ENCODE measurements at regions of chr6 and their contacts with region 1.

Region 1: GRCh38 chr6:136737871-136738691 is 54.2 kb downstream of the MAP3K5 start:
- DNase-seq: no peak
- ATAC-seq: no peak
- H3K4me3 ChIP-seq: no peak overlapping the region
- H3K4me3 Mint-ChIP-seq: no peak overlapping the region
- H3K27ac ChIP-seq: no peak overlapping the region
- H3K27ac Mint-ChIP-seq: no peak overlapping the region
- H3K4me1 ChIP-seq: peaks cover 0 to 11% of the 10 kb centered on the region in 2 experiments
- H3K4me1 Mint-ChIP-seq: peaks cover 28 to 65% (median 46%) of the 10 kb centered on the region in 3 donors
- H3K27me3 ChIP-seq: no peaks in the 10 kb centered on the region
- H3K27me3 Mint-ChIP-seq: no peaks in the 10 kb centered on the region

Region 2: GRCh38 chr6:135703621-135704020 is 1034.5 kb before region 1 on chr6:
- CTCF ChIA-PET with region 1: no interaction called
- POLR2A ChIA-PET with region 1: no interaction called
- DNase-seq: no peak
- ATAC-seq: no peak
- H3K4me3 ChIP-seq: no peak overlapping the region
- H3K4me3 Mint-ChIP-seq: no peak overlapping the region
- H3K27ac ChIP-seq: no peak overlapping the region
- H3K27ac Mint-ChIP-seq: no peak overlapping the region
- H3K4me1 ChIP-seq: no peaks in the 10 kb centered on the region
- H3K4me1 Mint-ChIP-seq: no peaks in the 10 kb centered on the region
- H3K27me3 ChIP-seq: peaks cover 0 to 6% of the 10 kb centered on the region in 2 experiments
- H3K27me3 Mint-ChIP-seq: peaks cover 0 to 4% of the 10 kb centered on the region in 2 donors

Region 3: DNA sequence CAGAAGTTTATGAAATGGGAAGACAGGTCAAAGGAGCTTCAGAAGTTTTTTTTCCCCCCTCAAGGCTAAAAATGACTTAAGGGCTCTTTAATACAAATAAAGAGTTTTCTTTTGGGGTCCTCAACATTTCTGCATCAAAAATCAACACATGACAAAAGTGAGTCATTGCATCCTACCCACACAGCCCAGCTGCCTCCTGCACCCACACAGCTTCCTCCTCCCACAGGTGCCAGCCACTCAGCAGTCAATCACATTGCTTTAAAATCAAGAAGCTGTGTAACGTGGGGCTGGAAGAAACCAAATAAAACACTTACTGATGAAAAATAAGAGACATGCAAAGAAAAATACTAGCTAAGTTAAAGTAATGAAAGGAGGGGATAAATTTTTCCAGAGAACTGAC is 14.3 kb before region 1 on chr6:
- CTCF ChIA-PET with region 1: interaction called in 1 of 2 experiments, 3 read pairs
- POLR2A ChIA-PET with region 1: interaction called in 1 of 2 experiments, 14 read pairs
- DNase-seq: peak in 32 of 35 experiments; percentile 4 to 44 (median 21)
- ATAC-seq: peak; percentile 84 to 99 (median 90)
- H3K4me3 ChIP-seq: no peak overlapping the region
- H3K4me3 Mint-ChIP-seq: peak overlapping the region in 1 of 3 donors; percentile 43
- H3K27ac ChIP-seq: no peak overlapping the region
- H3K27ac Mint-ChIP-seq: peak overlapping the region; percentile 23 to 44
- H3K4me1 ChIP-seq: peaks cover 2 to 10% of the 10 kb centered on the region in 2 experiments
- H3K4me1 Mint-ChIP-seq: peaks cover 30 to 63% (median 45%) of the 10 kb centered on the region in 3 donors
- H3K27me3 ChIP-seq: no peaks in the 10 kb centered on the region
- H3K27me3 Mint-ChIP-seq: no peaks in the 10 kb centered on the region

Region 4: DNA sequence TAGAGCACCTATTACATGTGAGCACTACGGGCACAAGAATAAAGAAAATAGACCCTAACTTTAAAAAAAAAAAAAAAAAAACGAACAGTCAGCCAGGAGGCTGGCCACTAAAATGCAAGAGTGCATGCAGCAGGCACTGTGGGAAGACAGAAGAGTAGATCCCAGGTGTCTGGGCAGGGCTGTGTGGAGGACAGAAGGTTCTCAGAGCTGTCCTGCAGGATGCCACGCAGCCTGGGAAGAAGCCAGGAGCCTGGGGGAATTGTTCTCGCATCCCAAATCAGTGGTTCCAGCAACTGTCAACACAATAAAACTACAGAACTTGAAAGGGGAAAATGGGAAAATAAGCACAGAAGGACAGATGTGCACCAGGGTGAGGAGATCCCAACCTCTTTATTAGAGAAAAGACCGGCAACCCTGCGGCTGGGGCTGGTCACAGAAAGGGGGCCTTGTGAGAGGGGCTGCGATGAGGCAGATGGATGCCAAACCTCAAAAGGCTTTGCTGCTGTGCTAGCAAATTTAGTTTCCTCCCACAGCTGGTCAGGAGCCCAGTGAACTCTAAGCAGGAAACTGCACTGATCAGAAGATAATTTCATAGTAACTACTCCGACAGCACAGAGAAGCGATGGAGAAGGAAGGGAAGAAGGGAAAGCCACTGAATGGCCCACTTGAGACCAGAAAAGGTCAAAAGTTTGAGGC is 23.3 kb after region 1 on chr6:
- CTCF ChIA-PET with region 1: no interaction called
- POLR2A ChIA-PET with region 1: interaction called in 1 of 2 experiments, 12 read pairs
- DNase-seq: peak in 9 of 35 experiments; percentile 5 to 56 (median 23)
- ATAC-seq: peak; percentile 55 to 72 (median 64)
- H3K4me3 ChIP-seq: peak overlapping the region in 1 of 2 donors; percentile 30
- H3K4me3 Mint-ChIP-seq: peak overlapping the region; percentile 59 to 82 (median 72)
- H3K27ac ChIP-seq: peak overlapping the region; percentile 84
- H3K27ac Mint-ChIP-seq: peak overlapping the region; percentile 93
- H3K4me1 ChIP-seq: peaks cover 17 to 65% of the 10 kb centered on the region in 2 experiments
- H3K4me1 Mint-ChIP-seq: peaks cover 60 to 78% (median 66%) of the 10 kb centered on the region in 3 donors
- H3K27me3 ChIP-seq: no peaks in the 10 kb centered on the region
- H3K27me3 Mint-ChIP-seq: no peaks in the 10 kb centered on the region

Measured in T-cell (primary cell).